ENCODE measurements at regions of chr2 and their contacts with region 1.

Region 1: DNA sequence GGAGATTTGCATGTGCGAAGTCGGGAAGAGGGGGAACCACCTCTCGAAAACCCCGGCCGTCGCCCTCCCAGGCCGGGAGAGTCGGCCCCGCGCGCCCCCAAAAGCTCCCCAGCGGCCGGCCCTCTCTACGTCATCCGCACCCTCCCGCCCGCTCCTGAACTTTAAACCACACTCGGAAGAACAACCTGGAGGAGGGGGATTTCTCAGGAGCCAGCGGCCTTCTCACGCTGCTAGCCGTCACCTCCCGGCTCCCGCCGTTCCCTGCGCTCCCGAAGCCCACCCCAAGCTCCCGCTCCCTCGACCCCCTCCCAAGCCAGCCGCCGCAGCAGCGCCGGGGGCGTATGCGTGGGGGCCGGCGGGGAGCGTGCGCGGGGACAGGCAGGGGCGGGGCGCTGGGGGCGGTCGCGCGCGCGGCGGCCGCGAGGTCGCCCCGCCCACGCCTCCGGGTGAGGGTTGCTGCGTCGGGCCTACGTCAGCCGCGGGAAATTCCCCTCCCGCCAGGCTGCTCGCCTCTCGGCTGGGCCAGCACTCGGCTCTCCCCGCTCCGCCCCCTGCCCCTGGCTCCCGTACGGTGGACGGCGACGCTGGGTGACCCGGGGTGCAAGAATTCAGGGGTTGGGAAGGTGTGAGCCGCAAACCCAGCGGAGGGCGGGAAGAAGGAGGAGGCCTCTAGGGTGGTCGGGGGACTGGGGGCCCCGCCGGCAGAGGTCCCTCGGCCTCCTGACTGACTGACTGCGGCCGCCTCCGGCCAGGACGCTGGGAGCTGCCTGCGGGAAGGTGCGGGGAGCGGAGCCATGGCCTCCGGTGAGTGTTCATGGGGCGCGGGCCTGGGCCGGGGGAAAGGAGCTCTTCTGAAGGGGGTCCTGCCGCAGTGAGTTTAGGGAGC is at the start of gene REL:
- DNase-seq: peak; percentile 96
- ATAC-seq: peak; percentile 79
- H3K4me3 Mint-ChIP-seq: peak within 1 kb of the TSS; percentile 95
- H3K27ac Mint-ChIP-seq: peak within 1 kb of the TSS; percentile 97
- H3K4me1 Mint-ChIP-seq: peaks cover 25% of the 10 kb centered on the region
- H3K27me3 Mint-ChIP-seq: no peaks in the 10 kb centered on the region
- CTCF ChIP-seq: no peak
- total RNA-seq, gene REL: 84.7 to 85.3 TPM

Region 2: GRCh38 chr2:60806988-60807681 is 74.2 kb before region 1 on chr2:
- CTCF ChIA-PET with region 1: interaction called, 32 read pairs
- POLR2A ChIA-PET with region 1: interaction called, 27 read pairs
- intact Hi-C with region 1: no loop called
- DNase-seq: peak; percentile 81
- ATAC-seq: peak; percentile 93
- H3K4me3 Mint-ChIP-seq: peak overlapping the region; percentile 26
- H3K27ac Mint-ChIP-seq: peak overlapping the region; percentile 91
- H3K4me1 Mint-ChIP-seq: peaks cover 51% of the 10 kb centered on the region
- H3K27me3 Mint-ChIP-seq: no peaks in the 10 kb centered on the region
- CTCF ChIP-seq: no peak

Region 3: GRCh38 chr2:60818272-60818671 is 63.0 kb before region 1 on chr2:
- CTCF ChIA-PET with region 1: interaction called, 29 read pairs
- POLR2A ChIA-PET with region 1: interaction called, 31 read pairs
- intact Hi-C with region 1: loop called (anchors 2 kb)
- DNase-seq: peak; percentile 85
- ATAC-seq: peak; percentile 44
- H3K4me3 Mint-ChIP-seq: peak overlapping the region; percentile 36
- H3K27ac Mint-ChIP-seq: peak overlapping the region; percentile 99
- H3K4me1 Mint-ChIP-seq: peaks cover 50% of the 10 kb centered on the region
- H3K27me3 Mint-ChIP-seq: no peaks in the 10 kb centered on the region
- CTCF ChIP-seq: peak; percentile 42

Region 4: DNA sequence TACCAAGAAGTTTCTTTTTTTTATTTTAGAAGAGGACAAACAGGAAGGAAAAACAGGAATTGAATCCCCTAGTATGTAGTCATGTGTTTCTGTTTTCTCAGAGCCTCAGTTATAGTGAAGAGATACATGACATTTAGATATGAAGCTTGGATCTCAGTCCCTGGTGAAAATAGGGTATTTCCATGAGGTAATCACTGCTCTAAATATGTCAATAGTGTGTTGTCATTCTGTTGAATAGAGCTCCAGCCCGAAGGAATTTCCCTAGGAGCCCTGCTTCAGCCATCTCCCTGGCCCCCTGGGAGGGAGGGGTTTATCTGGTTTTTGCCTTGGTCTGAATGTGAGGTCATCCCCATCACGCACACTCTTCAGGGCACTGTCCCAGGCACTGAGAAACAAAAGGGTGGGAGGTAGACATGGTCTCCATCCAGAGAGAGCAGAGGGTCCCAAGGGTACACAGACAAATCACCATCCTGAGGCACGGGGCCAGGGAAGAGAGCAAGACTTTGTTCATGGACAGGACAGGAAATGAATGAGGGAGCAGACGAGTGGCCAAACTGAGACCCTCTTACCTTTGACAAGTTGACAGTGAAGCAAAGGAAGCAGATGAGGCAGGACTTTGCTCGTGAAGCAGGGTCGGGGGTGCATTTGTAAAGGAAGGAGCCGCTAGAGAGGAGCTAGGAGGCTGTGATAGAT is 46.9 kb before region 1 on chr2:
- CTCF ChIA-PET with region 1: interaction called, 11 read pairs
- POLR2A ChIA-PET with region 1: interaction called, 12 read pairs
- intact Hi-C with region 1: no loop called
- DNase-seq: no peak
- ATAC-seq: peak; percentile 27
- H3K4me3 Mint-ChIP-seq: no peak overlapping the region
- H3K27ac Mint-ChIP-seq: peak overlapping the region; percentile 36
- H3K4me1 Mint-ChIP-seq: peaks cover 43% of the 10 kb centered on the region
- H3K27me3 Mint-ChIP-seq: no peaks in the 10 kb centered on the region
- CTCF ChIP-seq: no peak

Region 5: DNA sequence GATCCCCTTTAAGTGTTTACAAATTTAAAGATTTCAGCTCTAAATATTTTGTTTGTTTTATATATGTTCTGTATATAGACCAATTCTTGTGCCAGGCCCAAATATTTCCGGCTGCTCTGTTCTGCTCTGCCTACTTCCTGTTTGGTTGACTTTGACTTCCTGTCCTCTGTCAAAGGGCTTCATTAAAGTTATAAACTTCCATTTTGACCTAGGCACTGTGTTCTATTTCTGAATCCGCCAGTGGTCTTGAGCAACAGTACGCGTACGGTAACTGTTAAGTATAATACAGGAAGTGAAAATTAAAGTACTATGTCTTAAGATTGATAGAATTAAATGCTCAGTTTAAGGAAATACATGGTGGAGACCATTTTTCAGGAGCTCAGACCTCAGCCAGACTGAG is 13.4 kb before region 1 on chr2:
- CTCF ChIA-PET with region 1: interaction called, 3 read pairs
- POLR2A ChIA-PET with region 1: interaction called, 14 read pairs
- intact Hi-C with region 1: no loop called
- DNase-seq: peak; percentile 58
- ATAC-seq: peak; percentile 58
- H3K4me3 Mint-ChIP-seq: peak overlapping the region; percentile 11
- H3K27ac Mint-ChIP-seq: peak overlapping the region; percentile 85
- H3K4me1 Mint-ChIP-seq: peaks cover 31% of the 10 kb centered on the region
- H3K27me3 Mint-ChIP-seq: no peaks in the 10 kb centered on the region
- CTCF ChIP-seq: no peak

Region 6: DNA sequence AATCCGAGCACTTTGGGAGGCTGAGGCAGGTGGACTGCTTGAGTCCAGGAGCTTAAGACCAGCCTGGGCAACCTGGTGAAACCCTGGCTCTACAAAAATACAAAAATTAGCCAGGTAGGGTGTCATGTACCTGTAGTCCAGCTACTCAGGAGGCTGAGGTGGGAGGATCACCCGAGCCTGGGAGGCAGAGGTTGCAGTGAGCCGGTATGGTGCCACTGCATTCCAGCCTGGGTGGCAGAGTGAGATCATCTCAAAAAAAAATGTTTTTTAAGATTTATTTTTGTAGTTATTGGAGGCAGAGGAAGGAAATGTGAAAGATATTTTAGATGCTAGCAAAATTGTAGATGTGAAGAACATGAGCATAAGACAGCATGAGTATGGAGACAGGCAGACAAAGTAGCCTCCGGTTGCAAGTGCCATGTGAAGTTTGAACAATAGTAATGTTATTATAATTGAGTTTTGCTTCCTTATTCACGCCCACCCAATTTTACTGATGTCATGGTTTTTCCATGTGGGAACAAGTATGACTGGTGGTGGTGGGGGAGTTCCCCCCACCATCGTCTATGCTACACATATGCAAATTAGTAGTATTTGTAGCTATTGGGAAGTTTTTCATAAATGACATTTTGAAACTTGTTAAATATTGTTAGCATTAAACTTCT is 18.1 kb after region 1 on chr2:
- CTCF ChIA-PET with region 1: no interaction called
- POLR2A ChIA-PET with region 1: interaction called, 10 read pairs
- intact Hi-C with region 1: no loop called
- DNase-seq: peak; percentile 82
- ATAC-seq: peak; percentile 82
- H3K4me3 Mint-ChIP-seq: peak overlapping the region; percentile 56
- H3K27ac Mint-ChIP-seq: peak overlapping the region; percentile 94
- H3K4me1 Mint-ChIP-seq: peaks cover 56% of the 10 kb centered on the region
- H3K27me3 Mint-ChIP-seq: no peaks in the 10 kb centered on the region
- CTCF ChIP-seq: no peak

Region 7: GRCh38 chr2:60934165-60934722 is 53.0 kb after region 1 on chr2:
- CTCF ChIA-PET with region 1: no interaction called
- POLR2A ChIA-PET with region 1: no interaction called
- intact Hi-C with region 1: no loop called
- DNase-seq: no peak
- ATAC-seq: no peak
- H3K4me3 Mint-ChIP-seq: no peak overlapping the region
- H3K27ac Mint-ChIP-seq: no peak overlapping the region
- H3K4me1 Mint-ChIP-seq: peaks cover 26% of the 10 kb centered on the region
- H3K27me3 Mint-ChIP-seq: no peaks in the 10 kb centered on the region
- CTCF ChIP-seq: no peak

Region 8: GRCh38 chr2:61016808-61017555 is 135.7 kb after region 1 on chr2:
- CTCF ChIA-PET with region 1: no interaction called
- POLR2A ChIA-PET with region 1: interaction called, 10 read pairs
- intact Hi-C with region 1: no loop called
- DNase-seq: peak; percentile 80
- ATAC-seq: peak; percentile 77
- H3K4me3 Mint-ChIP-seq: peak overlapping the region; percentile 97
- H3K27ac Mint-ChIP-seq: peak overlapping the region; percentile 98
- H3K4me1 Mint-ChIP-seq: peaks cover 43% of the 10 kb centered on the region
- H3K27me3 Mint-ChIP-seq: no peaks in the 10 kb centered on the region
- CTCF ChIP-seq: no peak

Measured in activated CD8-positive, alpha-beta T cell treated with anti-CD3 and anti-CD28 coated beads for 36 hours (primary cell).